GM18951 (cell line): ENCODE measurements at regions of chr19 and their contacts with region 1.

Region 1: GRCh38 chr19:2610637-2611482 is 91.6 kb downstream of the GNG7 start:
- POLR2A ChIP-seq: peak; percentile 29

Region 2: DNA sequence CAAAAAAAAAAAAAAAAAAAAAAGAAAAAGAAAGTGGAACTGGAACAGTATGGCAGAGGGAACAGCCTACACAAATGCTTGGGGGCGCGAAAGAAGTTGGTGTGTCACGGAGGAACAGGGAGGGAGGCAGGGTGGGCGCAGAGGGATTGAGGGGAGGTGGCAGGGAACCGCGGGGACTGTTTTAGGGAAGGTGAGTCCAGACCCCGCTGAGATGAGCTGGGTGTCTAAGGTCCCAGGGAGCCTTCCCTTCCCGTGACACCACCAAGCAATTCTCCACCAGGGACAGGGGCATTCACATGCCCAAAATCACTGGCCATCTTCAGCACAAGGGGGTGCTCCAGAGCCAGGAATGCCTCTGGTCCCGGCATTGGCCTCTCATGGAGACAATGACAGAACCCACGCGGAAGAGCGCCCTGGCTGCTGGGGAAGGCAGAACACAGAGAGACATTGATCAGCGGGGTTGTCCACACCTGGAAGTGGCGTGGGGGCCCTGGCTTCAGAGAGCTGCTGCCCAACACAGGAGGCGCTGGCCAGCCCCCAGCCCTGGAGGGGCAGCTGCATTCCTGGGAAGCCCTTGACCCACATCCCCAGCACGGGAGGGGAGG is 335.8 kb before region 1 on chr19:
- in situ Hi-C with region 1: loop called (anchors 25 kb)
- POLR2A ChIP-seq: no peak

Region 3: DNA sequence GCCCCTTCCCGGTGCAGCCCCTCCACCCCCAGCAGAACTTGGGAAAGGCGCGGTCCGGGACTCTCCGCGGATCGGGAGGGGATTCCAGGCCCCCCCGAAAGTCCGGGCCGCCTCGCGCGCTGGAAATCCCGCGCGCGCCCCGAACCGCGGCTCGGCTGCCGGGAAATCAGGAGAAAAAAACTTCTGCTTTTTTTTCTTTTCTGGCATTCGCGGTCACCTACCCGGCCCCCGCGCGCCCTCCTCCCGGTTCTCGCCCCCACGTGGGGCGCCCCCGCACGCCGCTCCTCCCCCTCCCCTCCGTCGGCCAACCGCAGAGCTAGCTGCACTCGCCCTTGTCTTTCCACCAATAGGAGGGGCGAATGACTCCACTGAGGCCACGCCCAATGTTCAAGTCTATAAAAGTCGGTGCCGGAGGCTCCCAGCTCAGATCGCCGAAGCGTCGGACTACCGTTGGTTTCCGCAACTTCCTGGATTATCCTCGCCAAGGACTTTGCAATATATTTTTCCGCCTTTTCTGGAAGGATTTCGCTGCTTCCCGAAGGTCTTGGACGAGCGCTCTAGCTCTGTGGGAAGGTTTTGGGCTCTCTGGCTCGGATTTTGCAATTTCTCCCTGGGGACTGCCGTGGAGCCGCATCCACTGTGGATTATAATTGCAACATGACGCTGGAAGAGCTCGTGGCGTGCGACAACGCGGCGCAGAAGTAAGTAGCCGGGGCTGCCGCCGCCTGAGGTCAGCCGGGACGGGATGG is 135.0 kb before region 1 on chr19 and contains the start of gene GADD45B:
- in situ Hi-C with region 1: loop called (anchors 5 kb)
- POLR2A ChIP-seq: peak; percentile 100